ENCODE measurements at regions of chr4 and their contacts with region 1.

Region 1: DNA sequence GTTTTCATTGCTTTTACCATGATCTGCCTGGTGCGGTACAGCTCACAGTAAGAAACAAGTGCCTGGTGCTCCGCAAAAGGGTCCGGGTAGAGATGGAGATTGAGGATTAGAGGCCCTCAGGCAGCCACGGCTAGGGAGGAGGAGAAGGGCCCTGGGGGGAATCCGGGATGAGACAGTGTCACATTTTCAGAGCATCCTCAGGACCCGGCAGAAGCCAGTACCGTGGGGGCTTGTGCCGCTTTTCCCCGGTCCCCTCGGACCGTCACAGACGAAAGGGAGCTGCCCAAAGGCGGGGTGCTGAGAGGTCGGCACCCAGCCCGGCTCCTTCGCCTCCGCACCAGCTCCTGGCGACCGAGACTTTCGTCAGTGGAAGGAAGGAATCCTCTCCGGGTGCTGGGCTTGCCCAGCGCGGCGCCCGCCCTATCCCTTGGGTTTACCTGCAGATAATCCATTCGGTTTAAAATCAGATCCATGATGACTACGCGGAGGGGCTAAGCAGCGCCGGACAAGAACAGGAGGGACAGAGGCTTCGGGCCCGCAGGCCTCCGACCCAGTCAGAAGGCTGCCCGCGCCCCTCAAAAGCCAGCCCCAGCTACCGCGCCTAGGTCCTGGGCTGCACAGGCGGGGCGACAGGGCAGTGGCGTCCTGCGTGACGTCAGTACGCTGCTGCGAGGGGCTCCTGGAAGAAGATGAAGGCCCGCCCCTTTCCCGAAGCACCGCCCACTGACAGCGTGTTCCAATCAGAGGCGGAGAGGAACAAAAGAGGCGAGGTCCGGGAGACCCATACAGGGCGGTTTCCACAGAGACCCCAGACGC is at the start of gene BBS7:
- DNase-seq: peak; percentile 99
- H3K4me3 ChIP-seq: peak within 1 kb of the TSS; percentile 59 to 91 (median 76)
- H3K27ac ChIP-seq: peak within 1 kb of the TSS; percentile 86 to 97 (median 90)
- H3K4me1 ChIP-seq: peaks cover 0 to 14% (median 6%) of the 10 kb centered on the region in 4 donors
- H3K27me3 ChIP-seq: no peaks in the 10 kb centered on the region
- CTCF ChIP-seq: no peak
- EP300 ChIP-seq: no peak
- POLR2A ChIP-seq: peak; percentile 56 to 65
- total RNA-seq, gene BBS7: 12.7 to 14.6 (median 13.6) TPM

Region 2: GRCh38 chr4:121800961-121801714 is 68.9 kb before region 1 on chr4 and contains the start of gene EXOSC9:
- intact Hi-C with region 1: loop called (anchors 5 kb)
- DNase-seq: peak; percentile 96
- H3K4me3 ChIP-seq: peak within 1 kb of the TSS; percentile 82 to 90 (median 88)
- H3K27ac ChIP-seq: peak within 1 kb of the TSS; percentile 85 to 96 (median 89)
- H3K4me1 ChIP-seq: peaks cover 0 to 17% (median 9%) of the 10 kb centered on the region in 4 donors
- H3K27me3 ChIP-seq: no peaks in the 10 kb centered on the region
- CTCF ChIP-seq: no peak
- EP300 ChIP-seq: peak in 1 of 4 donors; percentile 53
- POLR2A ChIP-seq: peak; percentile 74 to 80
- total RNA-seq, gene EXOSC9: 12.5 to 25.3 (median 18.6) TPM

Region 3: GRCh38 chr4:121823505-121824170 is 46.4 kb before region 1 on chr4 and contains the start of gene CCNA2:
- intact Hi-C with region 1: loop called (anchors 5 kb)
- DNase-seq: peak; percentile 98
- H3K4me3 ChIP-seq: peak within 1 kb of the TSS; percentile 44 to 62 (median 54)
- H3K27ac ChIP-seq: peak within 1 kb of the TSS; percentile 77 to 85 (median 80)
- H3K4me1 ChIP-seq: peaks cover 0 to 20% (median 9%) of the 10 kb centered on the region in 4 donors
- H3K27me3 ChIP-seq: no peaks in the 10 kb centered on the region
- CTCF ChIP-seq: no peak
- EP300 ChIP-seq: no peak
- POLR2A ChIP-seq: peak in 1 of 2 donors; percentile 47
- total RNA-seq, gene CCNA2: 2.1 to 2.3 (median 2.2) TPM

Region 4: DNA sequence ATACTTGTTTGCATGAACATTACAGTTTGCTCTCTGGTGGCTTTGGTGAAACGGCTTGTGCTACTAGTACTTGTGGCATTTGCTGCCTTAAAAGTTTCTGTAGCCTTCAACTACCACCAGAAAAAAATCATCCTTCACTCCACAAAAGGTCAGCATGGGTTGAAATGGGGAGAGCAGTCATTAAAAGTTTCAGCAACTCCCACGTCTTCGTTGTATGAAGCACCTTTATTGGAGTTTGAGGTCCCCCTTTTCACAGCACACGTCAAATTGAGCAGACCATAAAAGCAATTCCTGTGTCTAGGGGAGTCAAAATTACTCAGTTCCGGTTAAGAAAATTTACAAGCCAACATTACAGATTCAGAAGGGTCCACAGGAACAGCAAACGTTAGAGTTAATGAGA is 23.4 kb before region 1 on chr4:
- intact Hi-C with region 1: no loop called
- DNase-seq: no peak
- H3K4me3 ChIP-seq: no peak overlapping the region
- H3K27ac ChIP-seq: no peak overlapping the region
- H3K4me1 ChIP-seq: no peaks in the 10 kb centered on the region
- H3K27me3 ChIP-seq: no peaks in the 10 kb centered on the region
- CTCF ChIP-seq: no peak
- EP300 ChIP-seq: no peak
- POLR2A ChIP-seq: no peak

Region 5: DNA sequence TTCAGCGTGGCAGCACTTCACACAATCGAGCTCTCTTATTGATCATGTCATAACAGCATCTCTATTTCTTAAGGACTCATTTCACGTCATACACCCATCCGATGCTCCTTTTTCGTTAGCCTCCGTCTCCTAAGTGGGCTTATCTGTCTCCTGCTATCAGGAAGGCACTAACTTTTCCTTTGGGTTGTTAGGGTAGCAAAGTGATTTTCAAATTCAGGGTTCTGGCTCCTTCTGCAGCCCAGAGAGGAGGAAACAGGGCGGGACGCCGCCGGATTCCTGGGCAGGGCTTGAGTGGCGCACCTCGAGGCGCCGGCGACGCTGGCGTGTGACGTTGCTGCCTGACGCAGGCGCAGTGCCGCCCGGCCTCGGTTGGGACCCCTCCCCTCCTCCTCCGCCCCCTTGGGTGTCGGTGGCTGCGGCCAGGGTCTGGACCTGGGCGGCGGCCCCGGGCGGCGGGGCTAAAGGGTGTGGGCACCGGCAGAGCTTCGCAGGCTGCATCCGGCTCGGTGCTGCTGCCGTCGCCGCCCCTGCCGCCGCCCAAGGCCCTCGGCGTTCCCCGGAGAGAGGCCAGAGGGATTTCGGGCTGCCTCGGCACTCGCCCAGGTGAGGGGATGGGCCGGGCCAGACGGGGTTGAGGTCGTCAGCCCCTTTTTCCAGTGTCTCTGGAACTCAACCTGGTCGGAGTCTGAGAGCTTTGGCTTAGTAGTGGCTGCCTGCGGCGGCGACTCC is 282.1 kb after region 1 on chr4 and contains the start of gene BLTP1:
- intact Hi-C with region 1: loop called (anchors 5 kb)
- DNase-seq: peak; percentile 92
- H3K4me3 ChIP-seq: peak within 1 kb of the TSS; percentile 77 to 96 (median 84)
- H3K27ac ChIP-seq: peak within 1 kb of the TSS; percentile 90 to 95 (median 92)
- H3K4me1 ChIP-seq: peaks cover 0 to 28% (median 17%) of the 10 kb centered on the region in 4 donors
- H3K27me3 ChIP-seq: no peaks in the 10 kb centered on the region
- CTCF ChIP-seq: no peak
- EP300 ChIP-seq: peak in 1 of 4 donors; percentile 32
- POLR2A ChIP-seq: peak; percentile 26 to 62
- total RNA-seq, gene BLTP1: 75.8 to 120 (median 85.1) TPM